Heart right ventricle (tissue), 16 donors: ENCODE measurements at regions of chr11 and their contacts with region 1.

Region 1: DNA sequence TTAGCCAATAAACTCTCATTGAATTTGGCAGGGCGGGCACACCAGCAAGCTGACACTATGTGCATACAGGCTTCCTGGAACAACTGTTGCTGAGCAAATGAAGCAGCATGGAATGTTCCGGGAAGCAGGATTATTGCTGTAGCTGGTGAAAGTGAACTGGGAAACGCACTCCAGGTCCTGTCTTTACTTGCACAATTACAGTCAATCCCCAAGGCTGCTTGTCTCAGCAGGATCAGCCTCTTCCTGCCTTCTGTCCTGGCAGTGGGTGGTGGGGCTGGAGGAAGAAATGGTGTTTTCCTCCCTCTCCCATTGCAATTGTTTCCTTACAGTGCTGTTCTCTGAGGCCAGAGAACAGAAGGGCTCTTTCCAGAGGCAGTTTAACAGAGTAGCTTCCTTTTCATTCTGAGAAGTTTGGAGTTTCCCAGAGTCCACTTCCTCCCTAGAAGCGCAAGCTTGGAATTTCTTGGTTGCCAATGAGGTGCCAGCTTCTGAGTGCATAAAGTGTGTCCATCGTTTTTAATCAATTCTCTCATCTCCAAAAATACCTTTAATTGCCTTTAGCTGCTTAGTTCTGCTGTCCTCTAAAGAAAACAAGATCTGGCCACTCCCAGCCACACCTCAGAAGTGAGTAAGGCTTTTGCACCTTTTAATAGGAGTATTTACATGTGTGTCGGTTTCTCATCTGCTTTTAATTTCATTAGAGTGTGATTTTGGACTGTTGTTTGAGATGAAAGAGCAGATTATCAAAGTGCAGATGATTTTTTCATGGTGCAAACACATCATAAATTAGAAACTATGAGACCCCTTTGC is 19.9 kb downstream of the CD44 start:
- DNase-seq: peak in 1 of 2 donors; percentile 44
- ATAC-seq: peak; percentile 64 to 89 (median 70)
- H3K4me3 ChIP-seq: no peak overlapping the region
- H3K27ac ChIP-seq: peak overlapping the region; percentile 13 to 75 (median 46)
- H3K4me1 ChIP-seq: peaks cover 0 to 98% (median 33%) of the 10 kb centered on the region in 9 donors
- H3K27me3 ChIP-seq: no peaks in the 10 kb centered on the region
- CTCF ChIP-seq: no peak

Region 2: GRCh38 chr11:35087648-35088047 is 71.3 kb before region 1 on chr11:
- intact Hi-C with region 1: loop called in 1 of 10 experiments (anchors 5 kb)
- DNase-seq: peak in 1 of 2 donors; percentile 77
- ATAC-seq: peak; percentile 64 to 89 (median 81)
- H3K4me3 ChIP-seq: no peak overlapping the region
- H3K27ac ChIP-seq: peak overlapping the region in 9 of 10 donors; percentile 32 to 77 (median 50)
- H3K4me1 ChIP-seq: peaks cover 5 to 66% (median 59%) of the 10 kb centered on the region in 9 donors
- H3K27me3 ChIP-seq: no peaks in the 10 kb centered on the region
- CTCF ChIP-seq: no peak

Region 3: GRCh38 chr11:35111161-35112055 is 47.5 kb before region 1 on chr11:
- intact Hi-C with region 1: loop called in 1 of 10 experiments (anchors 2 kb)
- DNase-seq: peak in 1 of 2 donors; percentile 30
- ATAC-seq: peak; percentile 38 to 82 (median 53)
- H3K4me3 ChIP-seq: no peak overlapping the region
- H3K27ac ChIP-seq: peak overlapping the region in 6 of 10 donors; percentile 8 to 76 (median 28)
- H3K4me1 ChIP-seq: peaks cover 0 to 42% (median 19%) of the 10 kb centered on the region in 9 donors
- H3K27me3 ChIP-seq: no peaks in the 10 kb centered on the region
- CTCF ChIP-seq: no peak